OCI-LY7 (cell line): ENCODE measurements at regions of chr7 and their contacts with region 1.

Region 1: DNA sequence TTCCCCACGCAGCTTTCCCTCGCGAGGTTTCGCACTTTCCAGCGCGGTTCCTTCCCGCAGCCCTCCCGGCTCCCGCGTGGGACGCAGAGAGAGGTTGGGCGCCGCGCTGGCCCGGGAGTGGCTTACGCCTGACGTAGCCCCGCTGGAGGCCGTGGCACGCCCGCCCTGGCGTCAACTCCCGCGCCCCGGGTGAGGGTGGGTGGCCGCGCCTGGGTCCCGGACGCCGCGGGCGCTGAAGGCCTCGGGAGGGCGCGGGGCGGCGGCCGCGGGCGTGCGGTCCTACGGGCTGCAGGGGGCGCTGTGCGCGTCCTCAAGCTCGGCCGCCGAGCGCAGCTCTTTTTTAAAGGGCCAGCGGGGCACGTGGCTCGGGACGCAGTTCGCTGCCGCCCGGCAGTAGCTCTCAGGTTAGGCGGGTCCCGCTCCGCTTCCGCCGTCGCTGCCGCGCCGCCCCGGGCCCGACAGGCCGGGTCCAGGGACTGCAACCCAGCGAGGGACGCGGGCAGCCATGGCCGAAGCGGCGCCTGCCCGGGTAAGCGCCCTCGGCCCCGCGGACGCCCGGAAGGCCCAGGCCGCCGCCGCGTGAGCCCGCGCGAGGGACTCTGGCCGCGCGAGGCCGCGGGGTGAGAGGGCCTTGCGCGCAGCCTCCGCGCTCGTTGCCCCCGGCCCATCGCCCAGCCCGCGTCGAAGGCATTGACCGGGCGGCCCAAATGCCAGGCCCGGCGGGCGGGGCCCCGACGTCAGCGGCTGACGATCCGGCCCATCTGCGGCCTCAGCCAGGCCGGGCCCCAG is at the start of gene ZNF783:
- DNase-seq: peak; percentile 94
- H3K4me3 ChIP-seq: peak within 1 kb of the TSS; percentile 76
- H3K27ac ChIP-seq: no peak within 1 kb of the TSS
- H3K4me1 ChIP-seq: peaks cover 19% of the 10 kb centered on the region
- CTCF ChIP-seq: peak; percentile 80
- total RNA-seq, gene ZNF783: 10.5 and 13.1 TPM in 2 replicates

Region 2: DNA sequence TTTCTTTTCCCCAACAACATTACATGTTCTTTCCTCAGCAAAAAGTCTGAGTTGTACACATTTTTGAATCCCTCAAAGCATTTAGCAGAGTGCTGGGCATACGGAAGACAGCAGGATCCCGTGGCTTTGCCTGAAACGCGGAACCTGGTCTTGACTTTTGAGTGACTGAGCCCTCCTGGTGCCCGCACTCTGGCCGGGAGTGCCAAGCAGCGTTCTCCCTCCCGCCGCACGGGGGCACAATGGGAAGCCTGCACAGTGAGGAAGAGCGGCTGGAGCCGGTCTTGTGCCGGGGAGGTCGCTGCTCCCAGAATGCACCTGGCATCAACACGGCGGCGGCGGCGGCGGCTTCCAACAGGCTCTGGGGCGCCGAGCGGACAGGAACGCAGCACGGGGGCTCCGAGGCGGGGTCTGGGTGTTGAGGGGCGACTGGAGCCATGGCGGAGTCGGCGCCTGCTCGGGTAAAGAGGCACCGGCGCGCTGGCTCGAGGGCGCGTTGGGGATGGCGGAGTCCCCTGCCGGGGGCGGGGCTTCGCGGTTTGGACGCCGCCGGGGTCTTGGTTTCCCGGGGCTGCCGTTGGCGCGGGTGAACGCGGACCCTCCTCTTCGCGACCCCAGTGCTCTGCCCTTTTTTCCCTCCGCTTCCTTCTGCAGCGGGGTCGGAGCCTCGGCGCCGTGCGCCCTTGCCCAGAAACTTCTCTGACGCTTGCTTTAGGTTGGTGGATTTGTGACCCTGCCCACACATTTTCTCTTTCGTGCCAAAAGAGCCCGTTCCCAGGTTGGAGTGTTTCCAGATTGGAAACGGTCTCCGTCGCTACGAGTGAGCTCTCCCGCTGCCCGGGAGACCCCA is 22.5 kb before region 1 on chr7 and contains the start of gene ZNF212:
- CTCF ChIA-PET with region 1: no interaction called
- POLR2A ChIA-PET with region 1: interaction called, 3 read pairs
- intact Hi-C with region 1: loop called (anchors 2 kb)
- DNase-seq: peak; percentile 92
- H3K4me3 ChIP-seq: peak within 1 kb of the TSS; percentile 81
- H3K27ac ChIP-seq: peak within 1 kb of the TSS; percentile 23
- H3K4me1 ChIP-seq: peaks cover 16% of the 10 kb centered on the region
- CTCF ChIP-seq: peak; percentile 84
- total RNA-seq, gene ZNF212: 11.6 and 13.1 TPM in 2 replicates

Region 3: DNA sequence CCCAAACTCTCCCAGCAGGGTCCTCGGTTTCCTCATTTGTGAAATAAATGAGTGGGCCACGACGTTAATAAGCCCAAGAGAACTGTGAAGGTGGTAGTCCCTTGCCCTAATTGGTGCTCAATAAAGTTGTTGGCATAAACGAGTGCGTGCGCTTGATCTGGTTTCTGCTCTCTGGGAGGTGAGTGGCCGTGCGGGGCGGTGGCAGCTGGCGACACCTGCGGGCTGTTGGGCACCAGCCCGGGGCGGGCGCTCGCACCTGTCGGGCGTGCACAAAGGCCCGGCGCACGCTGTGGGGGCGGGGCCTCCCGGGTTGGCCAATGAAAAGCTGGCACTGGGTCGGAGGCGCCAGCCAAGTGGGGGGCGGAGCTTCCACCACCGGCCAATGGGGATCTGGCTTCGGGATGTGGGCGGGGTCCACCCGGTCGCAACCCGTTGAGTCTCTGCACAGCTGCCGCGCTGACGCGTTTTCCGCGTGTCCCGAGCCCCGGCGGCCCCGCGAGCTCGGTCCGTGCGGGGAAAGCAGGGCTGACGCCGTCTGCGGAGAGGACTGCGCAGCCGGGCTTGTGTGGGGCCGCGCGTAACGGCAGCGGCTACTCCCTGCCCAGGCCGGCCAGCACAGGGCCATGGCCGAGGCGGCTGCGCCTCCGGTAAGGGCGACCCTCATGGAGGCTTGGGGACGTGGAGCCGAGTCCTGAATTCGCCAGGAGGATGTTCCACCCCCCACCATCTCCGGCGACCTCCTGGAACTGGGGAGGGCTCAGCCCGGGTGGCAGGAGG is 23.0 kb after region 1 on chr7:
- CTCF ChIA-PET with region 1: no interaction called
- POLR2A ChIA-PET with region 1: interaction called, 5 read pairs
- intact Hi-C with region 1: loop called (anchors 1 kb)
- DNase-seq: peak; percentile 97
- H3K4me3 ChIP-seq: peak overlapping the region; percentile 64
- H3K27ac ChIP-seq: peak overlapping the region; percentile 78
- H3K4me1 ChIP-seq: peaks cover 34% of the 10 kb centered on the region
- CTCF ChIP-seq: peak; percentile 61

Region 4: DNA sequence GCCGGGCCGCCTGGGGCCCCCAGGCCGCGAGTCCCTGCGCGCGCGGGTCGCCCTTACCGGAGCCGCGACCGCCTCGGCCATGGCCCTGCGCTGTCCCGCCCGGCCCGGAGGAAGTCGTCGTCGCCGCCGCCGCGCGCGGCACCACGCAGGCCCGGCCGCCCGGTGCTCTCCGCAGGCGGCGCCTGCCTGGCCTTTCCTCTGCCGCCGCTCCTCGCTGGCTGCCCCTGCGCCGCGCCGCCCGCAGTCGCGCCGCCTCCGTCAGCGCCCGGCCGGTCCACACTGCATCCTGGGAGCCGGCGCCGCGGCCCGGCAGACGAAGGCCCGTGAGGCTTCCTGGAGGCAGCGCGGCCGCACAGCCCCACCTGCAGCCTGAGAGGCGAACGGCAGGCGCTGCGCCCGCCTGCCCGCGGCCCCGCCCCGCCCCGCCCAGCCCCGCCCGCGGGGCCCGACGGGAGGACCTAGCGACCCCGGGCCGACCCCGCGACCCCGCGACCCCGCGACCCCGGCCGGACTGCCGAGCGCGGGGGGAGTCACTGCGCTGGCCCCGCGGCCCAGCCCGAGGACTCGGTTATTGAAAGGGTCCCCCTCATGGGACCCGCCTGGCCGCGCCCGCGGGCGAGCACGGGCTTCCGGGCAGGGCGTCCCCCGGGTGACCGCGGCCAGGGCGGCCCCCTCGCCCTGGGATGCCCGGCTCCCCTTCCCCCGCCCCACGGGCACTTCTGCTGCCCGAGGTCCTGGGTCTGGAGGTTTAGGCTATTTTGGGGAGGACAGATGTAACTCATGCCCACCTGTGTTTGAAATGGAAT is 235.6 kb after region 1 on chr7 and contains the start of gene ZNF746:
- CTCF ChIA-PET with region 1: no interaction called
- POLR2A ChIA-PET with region 1: no interaction called
- intact Hi-C with region 1: loop called (anchors 1 kb)
- DNase-seq: peak; percentile 91
- H3K4me3 ChIP-seq: peak within 1 kb of the TSS; percentile 100
- H3K27ac ChIP-seq: no peak within 1 kb of the TSS
- H3K4me1 ChIP-seq: peaks cover 16% of the 10 kb centered on the region
- CTCF ChIP-seq: 0 out of 2 replicates have a peak, but pooled peaks have one; percentile 42
- total RNA-seq, gene ZNF746: 14.8 and 17.3 TPM in 2 replicates